ENCODE measurements at regions of chr5 and their contacts with region 1.

Region 1: DNA sequence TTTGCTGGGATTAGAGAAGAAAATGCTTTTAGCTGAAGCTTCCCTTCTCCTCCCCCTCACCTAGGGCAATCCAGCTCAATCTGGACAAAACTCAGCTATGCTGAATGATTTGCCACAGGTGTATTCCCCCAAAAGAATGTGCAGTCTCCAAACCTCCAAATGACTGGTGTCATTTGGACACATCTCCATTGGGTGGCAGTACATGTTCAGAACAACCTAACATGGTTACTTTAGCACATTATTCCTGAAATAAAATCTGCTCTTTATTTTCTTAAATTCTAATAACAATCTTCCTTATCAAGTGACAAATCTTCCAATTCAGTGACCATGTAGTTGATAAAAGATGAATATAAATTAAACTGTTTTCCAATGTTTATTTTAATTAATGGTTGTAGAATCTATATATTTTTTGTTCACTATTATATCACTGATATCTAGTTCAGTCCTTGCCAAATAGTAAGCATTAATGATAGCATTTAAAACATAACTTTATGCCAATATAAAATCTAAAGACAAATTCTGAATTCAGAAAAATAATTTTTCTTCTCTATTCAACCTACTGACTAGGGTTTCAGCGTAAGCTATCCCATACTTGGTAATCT is 61.3 kb upstream of the MOCS2 start:
- DNase-seq: peak in 6 of 7 donors; percentile 24 to 55 (median 36)
- H3K4me3 ChIP-seq: no peak overlapping the region
- H3K27ac ChIP-seq: no peak overlapping the region
- H3K4me1 ChIP-seq: peaks cover 13 to 15% of the 10 kb centered on the region in 2 donors
- H3K27me3 ChIP-seq: no peaks in the 10 kb centered on the region
- CTCF ChIP-seq: peak; percentile 43 to 83 (median 72)
- POLR2A ChIP-seq: no peak

Region 2: GRCh38 chr5:52328220-52328806 is 842.5 kb before region 1 on chr5:
- intact Hi-C with region 1: no loop called
- DNase-seq: no peak
- H3K4me3 ChIP-seq: no peak overlapping the region
- H3K27ac ChIP-seq: no peak overlapping the region
- H3K4me1 ChIP-seq: no peaks in the 10 kb centered on the region
- H3K27me3 ChIP-seq: no peaks in the 10 kb centered on the region
- CTCF ChIP-seq: no peak
- POLR2A ChIP-seq: no peak

Region 3: GRCh38 chr5:52648726-52649125 is 522.1 kb before region 1 on chr5:
- intact Hi-C with region 1: no loop called
- DNase-seq: no peak
- H3K4me3 ChIP-seq: no peak overlapping the region
- H3K27ac ChIP-seq: no peak overlapping the region
- H3K4me1 ChIP-seq: no peaks in the 10 kb centered on the region
- H3K27me3 ChIP-seq: no peaks in the 10 kb centered on the region
- CTCF ChIP-seq: no peak
- POLR2A ChIP-seq: no peak

Region 4: DNA sequence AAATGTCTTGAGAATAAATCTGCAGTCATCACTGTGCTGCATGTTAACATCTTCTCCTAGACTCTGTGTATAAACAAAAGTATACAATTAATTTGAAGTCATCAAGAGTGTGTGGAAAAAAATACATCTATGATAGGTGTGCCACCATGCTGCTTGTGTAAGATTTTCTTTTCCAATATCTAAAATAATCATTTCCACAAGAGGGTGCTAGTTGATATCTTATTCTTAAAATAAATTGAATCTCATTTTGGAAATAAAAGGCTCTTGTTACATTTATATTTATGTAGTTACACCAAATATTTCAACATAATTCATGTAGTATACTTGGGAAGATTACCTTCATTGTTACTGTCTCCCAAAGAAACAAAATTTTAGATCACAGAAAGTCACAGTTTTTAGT is 47.1 kb before region 1 on chr5:
- intact Hi-C with region 1: no loop called
- DNase-seq: no peak
- H3K4me3 ChIP-seq: no peak overlapping the region
- H3K27ac ChIP-seq: no peak overlapping the region
- H3K4me1 ChIP-seq: no peaks in the 10 kb centered on the region
- H3K27me3 ChIP-seq: no peaks in the 10 kb centered on the region
- CTCF ChIP-seq: peak; percentile 21 to 47 (median 30)
- POLR2A ChIP-seq: no peak

Region 5: DNA sequence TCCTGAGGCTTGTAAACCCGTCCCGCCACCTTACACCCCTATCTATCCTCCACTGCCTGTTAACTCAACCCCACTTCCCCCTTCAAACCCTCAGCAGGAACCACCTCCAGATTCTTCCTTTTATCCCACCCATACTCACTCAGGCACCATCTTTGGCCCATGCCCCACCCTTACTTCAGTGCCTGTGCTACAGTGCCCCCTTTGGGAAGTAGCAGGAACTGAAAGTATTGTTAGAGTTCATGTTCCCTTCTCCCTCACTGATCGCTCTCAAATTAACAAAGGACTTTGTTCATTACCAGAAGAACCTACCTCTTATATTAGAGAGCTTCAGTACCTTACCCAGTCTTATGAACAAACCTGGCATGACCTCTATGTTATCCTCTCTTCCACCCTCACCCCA is 30.9 kb after region 1 on chr5:
- intact Hi-C with region 1: no loop called
- DNase-seq: no peak
- H3K4me3 ChIP-seq: no peak overlapping the region
- H3K27ac ChIP-seq: no peak overlapping the region
- H3K4me1 ChIP-seq: peaks cover 9 to 21% of the 10 kb centered on the region in 2 donors
- H3K27me3 ChIP-seq: no peaks in the 10 kb centered on the region
- CTCF ChIP-seq: peak in 2 of 6 experiments; percentile 17 to 24
- POLR2A ChIP-seq: no peak

Region 6: DNA sequence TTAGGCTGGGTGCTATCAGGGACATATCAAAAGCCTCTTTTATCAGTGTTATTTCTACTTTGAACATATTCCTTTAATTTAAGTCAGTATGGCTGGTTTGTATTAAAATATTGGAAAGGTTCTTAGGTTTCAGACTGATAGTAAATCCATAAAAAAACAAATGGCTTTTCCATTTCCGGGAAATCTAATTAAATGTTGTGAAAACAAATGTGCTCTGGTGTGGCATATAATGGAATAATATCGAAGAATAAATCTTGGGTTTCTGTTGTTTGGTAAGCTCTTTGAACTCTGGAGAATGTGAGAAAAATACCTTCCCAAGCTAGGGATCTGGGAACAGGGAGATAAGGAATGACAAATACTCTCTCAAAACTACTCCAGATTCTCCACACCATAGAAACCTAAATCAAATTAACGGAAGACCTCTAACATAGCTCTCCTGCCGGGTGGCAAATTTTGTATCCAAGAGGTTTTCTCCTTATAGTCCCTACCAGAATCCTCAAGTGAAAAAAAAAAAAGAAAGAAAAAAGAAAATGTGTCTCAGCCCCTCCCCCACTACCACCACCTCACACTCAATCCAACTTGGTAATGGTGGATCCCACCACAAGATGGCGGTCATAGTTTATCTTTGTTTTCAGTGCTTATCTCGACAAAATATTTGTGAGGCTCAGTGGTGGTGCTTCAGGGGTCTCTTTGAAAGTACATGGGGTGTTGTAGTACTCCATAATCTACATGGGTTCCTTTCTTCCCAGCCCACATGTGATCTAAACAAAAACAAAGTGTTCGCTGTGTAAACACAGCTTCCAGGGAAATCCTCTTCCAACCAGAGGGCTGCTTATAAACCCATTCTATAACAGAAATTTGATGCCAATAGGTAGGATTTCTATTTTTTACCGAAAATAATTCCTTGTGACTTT is 255.0 kb after region 1 on chr5:
- intact Hi-C with region 1: loop called (anchors 5 to 10 kb)
- DNase-seq: peak in 1 of 7 donors; percentile 26
- H3K4me3 ChIP-seq: no peak overlapping the region
- H3K27ac ChIP-seq: no peak overlapping the region
- H3K4me1 ChIP-seq: peaks cover 4 to 8% of the 10 kb centered on the region in 2 donors
- H3K27me3 ChIP-seq: no peaks in the 10 kb centered on the region
- CTCF ChIP-seq: peak in 3 of 6 experiments; percentile 4 to 21 (median 10)
- POLR2A ChIP-seq: no peak